ENCODE measurements at regions of chr4 and their contacts with region 1.

Region 1: GRCh38 chr4:152961076-152961772 is 25.1 kb downstream of the FHDC1 start:
- DNase-seq: peak; percentile 69
- H3K4me3 ChIP-seq: no peak overlapping the region
- H3K27ac ChIP-seq: peak overlapping the region; percentile 44
- H3K4me1 ChIP-seq: peaks cover 37% of the 10 kb centered on the region
- H3K27me3 ChIP-seq: no peaks in the 10 kb centered on the region
- CTCF ChIP-seq: no peak
- POLR2A ChIP-seq: no peak

Region 2: DNA sequence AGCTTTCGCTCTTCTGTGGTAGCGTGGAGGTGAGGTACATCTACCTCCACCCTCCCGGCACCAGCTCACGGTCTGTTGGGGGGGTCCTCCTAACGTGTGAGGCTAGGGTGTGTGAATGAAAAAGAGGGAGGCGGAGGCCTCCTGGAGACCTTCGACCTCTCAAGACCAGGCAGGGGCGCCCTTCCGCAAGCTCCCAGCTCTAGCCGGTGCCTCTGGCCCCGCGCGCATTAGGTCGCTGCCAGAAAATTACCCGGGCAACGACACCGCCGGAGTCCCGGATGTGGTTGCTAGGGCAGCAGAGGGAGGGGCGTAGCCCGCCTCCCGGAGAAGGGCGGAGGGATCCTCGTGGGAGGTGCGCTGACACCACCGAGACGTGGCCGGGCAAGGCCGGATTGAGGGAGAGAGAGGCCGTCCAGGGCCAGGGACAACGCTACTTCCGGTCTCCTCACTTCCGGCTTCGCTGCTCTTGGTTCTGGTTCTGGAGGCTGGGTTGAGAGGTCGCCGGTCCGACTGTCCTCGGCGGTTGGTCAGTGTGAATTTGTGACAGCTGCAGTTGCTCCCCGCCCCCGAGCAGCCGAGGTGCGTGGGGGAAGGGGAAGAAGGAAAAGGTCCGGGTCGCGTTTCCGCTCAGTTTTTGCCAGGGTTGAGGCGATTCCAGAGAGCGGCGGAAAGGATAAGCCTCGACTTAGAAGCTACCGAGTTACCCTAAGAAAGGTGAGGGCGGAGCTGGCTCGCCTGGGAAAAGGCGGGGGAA is 181.5 kb before region 1 on chr4 and contains the starts of genes ARFIP1 and TIGD4:
- CTCF ChIA-PET with region 1: no interaction called
- POLR2A ChIA-PET with region 1: no interaction called
- dilution Hi-C with region 1: no loop called
- intact Hi-C with region 1: loop called (anchors 5 kb)
- DNase-seq: peak; percentile 96
- H3K4me3 ChIP-seq: peak within 1 kb of the TSS; percentile 67 to 76 (median 74)
- H3K27ac ChIP-seq: peak within 1 kb of the TSS; percentile 56
- H3K4me1 ChIP-seq: peaks cover 21% of the 10 kb centered on the region
- H3K27me3 ChIP-seq: peaks cover 0 to 11% of the 10 kb centered on the region in 2 experiments
- CTCF ChIP-seq: peak in 1 of 2 donors; percentile 4
- POLR2A ChIP-seq: peak; percentile 62
- total RNA-seq, gene ARFIP1: 24.2 and 24.6 TPM in 2 replicates
- total RNA-seq, gene TIGD4: 0.14 and 0.18 TPM in 2 replicates

Region 3: GRCh38 chr4:152937336-152938236 is 23.6 kb before region 1 on chr4:
- CTCF ChIA-PET with region 1: interaction called, 4 read pairs
- POLR2A ChIA-PET with region 1: interaction called, 3 read pairs
- dilution Hi-C with region 1: no loop called
- intact Hi-C with region 1: loop called (anchors 1 kb)
- DNase-seq: peak; percentile 26
- H3K4me3 ChIP-seq: peak overlapping the region; percentile 49 to 57 (median 51)
- H3K27ac ChIP-seq: no peak overlapping the region
- H3K4me1 ChIP-seq: peaks cover 17% of the 10 kb centered on the region
- H3K27me3 ChIP-seq: peaks cover 52 to 74% of the 10 kb centered on the region in 2 experiments
- CTCF ChIP-seq: no peak
- POLR2A ChIP-seq: no peak

Region 4: DNA sequence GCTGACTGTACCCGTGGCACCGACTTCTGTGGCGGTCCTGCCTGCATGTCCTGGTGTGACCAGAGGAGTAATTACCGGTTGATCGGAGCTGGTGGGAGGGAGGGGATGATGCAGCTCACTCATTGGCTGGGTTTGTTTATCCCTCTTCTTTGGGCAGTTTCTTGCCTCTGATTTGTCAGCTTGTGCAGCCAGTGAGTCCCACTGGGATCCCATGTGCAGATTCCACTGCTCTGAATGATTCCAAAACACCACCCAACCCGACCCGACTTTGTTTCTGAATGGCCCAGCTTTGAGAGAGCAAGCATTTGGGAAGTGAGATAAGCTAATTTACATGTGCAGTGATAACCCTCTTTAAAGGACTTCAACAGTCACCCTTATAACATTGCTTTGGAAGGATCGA is 11.3 kb before region 1 on chr4:
- CTCF ChIA-PET with region 1: no interaction called
- POLR2A ChIA-PET with region 1: no interaction called
- dilution Hi-C with region 1: no loop called
- intact Hi-C with region 1: no loop called
- DNase-seq: no peak
- H3K4me3 ChIP-seq: no peak overlapping the region
- H3K27ac ChIP-seq: no peak overlapping the region
- H3K4me1 ChIP-seq: no peaks in the 10 kb centered on the region
- H3K27me3 ChIP-seq: peaks cover 3 to 18% of the 10 kb centered on the region in 2 experiments
- CTCF ChIP-seq: no peak
- POLR2A ChIP-seq: no peak